Ascending aorta (tissue), 2 donors: ENCODE measurements at regions of chr10 and their contacts with region 1.

Region 1: DNA sequence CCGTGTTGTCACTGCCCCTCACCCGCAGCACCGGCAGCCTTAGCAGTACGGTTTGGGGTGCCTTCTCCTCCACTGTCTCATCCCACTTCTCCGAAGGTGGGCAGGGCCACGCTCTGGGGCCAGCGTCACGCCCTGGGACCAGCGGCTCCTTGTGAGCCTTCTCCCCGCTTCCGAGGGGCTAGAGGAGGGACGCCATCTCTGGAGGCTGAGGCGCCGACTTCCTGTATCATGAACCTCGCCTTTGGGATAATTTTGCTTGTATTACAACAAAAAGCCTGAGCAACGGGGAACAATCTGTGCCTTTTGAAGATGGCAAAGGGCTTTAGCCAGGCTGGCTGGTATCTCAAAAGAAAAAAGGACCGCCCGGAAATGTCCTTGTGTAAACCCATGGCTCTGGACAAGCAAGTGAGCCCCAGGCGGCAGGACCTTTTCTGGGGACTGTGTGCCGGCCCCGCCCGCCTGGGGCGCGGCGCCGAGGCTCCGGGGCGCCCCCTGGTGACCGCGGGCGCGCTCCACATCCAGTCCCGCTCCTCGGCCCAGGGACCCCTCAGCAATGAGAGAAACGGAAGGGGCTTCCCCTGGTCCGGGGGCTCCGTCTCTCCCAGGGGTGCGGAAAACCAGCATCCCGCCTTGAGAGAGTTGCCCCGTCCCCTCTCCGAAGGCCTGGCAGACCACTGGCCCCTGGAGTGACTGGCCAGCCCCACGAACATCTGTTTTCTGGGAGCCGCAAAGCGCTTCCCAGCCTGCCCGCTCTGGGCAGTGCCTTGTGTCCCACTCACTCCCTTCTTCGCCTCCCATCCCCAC is 3.8 kb downstream of the DEPP1 start:
- DNase-seq: peak in 1 of 2 donors; percentile 88
- H3K4me3 ChIP-seq: peak overlapping the region; percentile 47 to 77
- H3K27ac ChIP-seq: peak overlapping the region; percentile 89 to 91
- H3K4me1 ChIP-seq: peaks cover 13 to 24% of the 10 kb centered on the region in 2 donors
- H3K27me3 ChIP-seq: no peaks in the 10 kb centered on the region
- CTCF ChIP-seq: peak; percentile 94 to 97 (median 97)

Region 2: GRCh38 chr10:43824934-43825333 is 1149.9 kb before region 1 on chr10:
- intact Hi-C with region 1: loop called (anchors 5 kb)
- DNase-seq: peak; percentile 42 to 92
- H3K4me3 ChIP-seq: no peak overlapping the region
- H3K27ac ChIP-seq: peak overlapping the region; percentile 88
- H3K4me1 ChIP-seq: peaks cover 6 to 38% of the 10 kb centered on the region in 2 donors
- H3K27me3 ChIP-seq: no peaks in the 10 kb centered on the region
- CTCF ChIP-seq: no peak

Region 3: GRCh38 chr10:44864637-44865288 is 110.1 kb before region 1 on chr10:
- intact Hi-C with region 1: loop called (anchors 5 kb)
- DNase-seq: peak in 1 of 2 donors; percentile 93
- H3K4me3 ChIP-seq: peak overlapping the region; percentile 51 to 68
- H3K27ac ChIP-seq: peak overlapping the region; percentile 29 to 58
- H3K4me1 ChIP-seq: peaks cover 0 to 14% of the 10 kb centered on the region in 2 donors
- H3K27me3 ChIP-seq: no peaks in the 10 kb centered on the region
- CTCF ChIP-seq: peak; percentile 91 to 99 (median 93)

Region 4: GRCh38 chr10:44959247-44960087 is 15.4 kb before region 1 on chr10 and contains the start of gene RASSF4:
- intact Hi-C with region 1: loop called (anchors 1 kb)
- DNase-seq: peak in 1 of 2 donors; percentile 95
- H3K4me3 ChIP-seq: peak within 1 kb of the TSS; percentile 78 to 93
- H3K27ac ChIP-seq: peak within 1 kb of the TSS; percentile 86 to 90
- H3K4me1 ChIP-seq: peaks cover 13 to 40% of the 10 kb centered on the region in 2 donors
- H3K27me3 ChIP-seq: no peaks in the 10 kb centered on the region
- CTCF ChIP-seq: peak in 1 of 3 experiments; percentile 15
- total RNA-seq, gene RASSF4: 40.0 TPM